Gastrocnemius medialis (tissue), 4 donors: ENCODE measurements at regions of chr14 and their contacts with region 1.

Region 1: DNA sequence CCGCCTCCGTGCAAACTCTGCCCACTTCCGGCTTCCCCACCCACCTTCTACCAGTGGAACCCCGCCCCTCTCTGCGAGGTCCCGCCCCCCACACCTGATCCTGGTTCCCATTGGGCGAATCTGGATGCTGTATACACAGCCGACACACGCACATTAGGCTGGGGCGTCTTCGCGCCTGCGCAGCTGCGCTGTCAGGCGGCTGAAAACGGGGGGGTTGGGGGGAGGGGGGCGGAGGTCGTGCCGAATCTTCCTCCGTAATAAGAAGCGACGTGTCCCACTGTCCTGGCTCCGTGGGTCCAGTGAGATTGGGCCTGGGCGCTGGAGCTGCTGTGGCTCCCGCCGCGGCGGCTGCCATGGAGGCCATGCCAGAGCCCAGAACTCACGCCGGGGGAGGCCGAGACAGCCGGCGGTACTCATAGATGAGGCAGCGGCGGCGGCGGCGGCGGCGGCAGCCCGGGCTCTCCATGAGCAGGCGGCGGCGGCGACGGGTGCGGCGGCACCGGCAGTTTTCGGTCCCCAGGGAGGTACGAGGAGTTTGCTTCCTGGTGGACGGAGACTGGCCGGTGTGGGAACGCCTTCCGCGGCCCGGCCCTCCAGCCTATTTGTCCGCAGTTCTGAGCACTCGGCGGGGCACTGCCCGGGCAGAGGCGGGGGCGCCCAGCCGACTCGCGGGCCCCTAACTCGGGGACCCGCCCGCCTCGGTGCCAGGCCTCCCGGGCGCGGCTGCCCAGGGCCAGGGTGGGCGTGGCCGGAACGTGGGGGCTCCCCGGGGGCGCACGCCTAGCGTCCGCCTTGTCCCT is 64.5 kb downstream of the KLHL28 start:
- DNase-seq: peak; percentile 97 to 99
- ATAC-seq: peak; percentile 97
- H3K4me3 ChIP-seq: peak overlapping the region; percentile 62 to 86 (median 67)
- H3K27ac ChIP-seq: peak overlapping the region; percentile 83 to 99 (median 92)
- H3K4me1 ChIP-seq: peaks cover 17% of the 10 kb centered on the region in 2 donors
- H3K27me3 ChIP-seq: no peaks in the 10 kb centered on the region
- CTCF ChIP-seq: peak in 1 of 5 experiments; percentile 8
- POLR2A ChIP-seq: peak; percentile 65 to 83

Region 2: DNA sequence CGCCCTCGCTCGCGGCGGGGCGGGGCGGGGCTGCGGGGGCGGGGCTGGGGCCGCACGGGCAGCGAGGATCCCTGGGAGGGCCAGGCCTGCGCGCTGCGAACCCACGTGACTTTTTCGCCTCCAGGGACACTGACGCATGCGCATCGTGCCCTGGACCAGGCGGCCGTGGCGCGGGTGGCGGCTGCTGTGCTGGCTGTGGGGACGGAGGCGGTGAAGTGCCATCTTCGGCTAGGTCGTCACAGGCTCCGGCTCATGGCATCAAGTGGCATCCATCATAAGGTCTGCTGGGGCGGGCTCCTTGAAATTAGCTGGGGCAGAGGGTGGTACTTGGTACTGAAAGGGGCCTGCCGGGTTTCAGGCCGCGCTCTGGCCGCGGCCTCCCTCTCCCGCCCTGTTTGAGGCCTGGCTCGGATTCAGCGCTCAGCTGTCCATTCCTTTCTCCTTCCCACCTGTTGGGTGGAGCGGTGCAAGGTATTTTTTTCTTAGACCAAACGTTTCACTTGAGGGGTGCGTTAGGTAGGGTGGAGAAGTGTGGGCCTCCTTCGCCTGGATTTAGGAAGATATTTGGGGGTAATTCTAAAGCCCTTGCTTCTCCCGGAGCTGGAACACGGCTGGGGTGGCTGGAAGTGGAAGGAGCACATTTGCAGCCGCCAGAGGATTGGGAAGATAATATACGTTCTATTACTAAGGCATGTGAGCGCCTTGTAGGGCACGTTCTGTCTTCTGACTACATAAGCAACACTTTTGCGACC is 186.9 kb after region 1 on chr14 and contains the start of gene PRPF39:
- in situ Hi-C with region 1: no loop called
- intact Hi-C with region 1: loop called (anchors 1 kb)
- DNase-seq: peak; percentile 92 to 94
- ATAC-seq: peak; percentile 96
- H3K4me3 ChIP-seq: peak within 1 kb of the TSS; percentile 71 to 93 (median 74)
- H3K27ac ChIP-seq: peak within 1 kb of the TSS; percentile 86 to 95 (median 90)
- H3K4me1 ChIP-seq: peaks cover 30 to 42% of the 10 kb centered on the region in 2 donors
- H3K27me3 ChIP-seq: no peaks in the 10 kb centered on the region
- CTCF ChIP-seq: no peak
- POLR2A ChIP-seq: peak; percentile 85 to 86
- total RNA-seq, gene PRPF39: 11.9 to 22.7 (median 13.7) TPM